ENCODE measurements at regions of chr2 and their contacts with region 1.

Region 1: GRCh38 chr2:56376699-56377665 is 193.2 kb downstream of the CCDC85A start:
- DNase-seq: no peak
- H3K4me3 ChIP-seq: no peak overlapping the region
- H3K27ac ChIP-seq: no peak overlapping the region
- H3K4me1 ChIP-seq: no peaks in the 10 kb centered on the region
- H3K27me3 ChIP-seq: no peaks in the 10 kb centered on the region
- CTCF ChIP-seq: no peak
- EP300 ChIP-seq: no peak
- POLR2A ChIP-seq: no peak

Region 2: GRCh38 chr2:56540916-56541315 is 163.9 kb after region 1 on chr2:
- intact Hi-C with region 1: no loop called
- DNase-seq: no peak
- H3K4me3 ChIP-seq: no peak overlapping the region
- H3K27ac ChIP-seq: no peak overlapping the region
- H3K4me1 ChIP-seq: no peaks in the 10 kb centered on the region
- H3K27me3 ChIP-seq: no peaks in the 10 kb centered on the region
- CTCF ChIP-seq: no peak
- EP300 ChIP-seq: no peak
- POLR2A ChIP-seq: no peak

Region 3: GRCh38 chr2:57396355-57397098 is 1019.5 kb after region 1 on chr2:
- intact Hi-C with region 1: loop called in 1 of 4 experiments (anchors 10 kb)
- DNase-seq: no peak
- H3K4me3 ChIP-seq: no peak overlapping the region
- H3K27ac ChIP-seq: no peak overlapping the region
- H3K4me1 ChIP-seq: no peaks in the 10 kb centered on the region
- H3K27me3 ChIP-seq: no peaks in the 10 kb centered on the region
- CTCF ChIP-seq: no peak
- EP300 ChIP-seq: no peak
- POLR2A ChIP-seq: no peak

Measured in ovary (tissue), 10 donors.